Esophagus muscularis mucosa (tissue), 4 donors: ENCODE measurements at regions of chr5 and their contacts with region 1.

Region 1: DNA sequence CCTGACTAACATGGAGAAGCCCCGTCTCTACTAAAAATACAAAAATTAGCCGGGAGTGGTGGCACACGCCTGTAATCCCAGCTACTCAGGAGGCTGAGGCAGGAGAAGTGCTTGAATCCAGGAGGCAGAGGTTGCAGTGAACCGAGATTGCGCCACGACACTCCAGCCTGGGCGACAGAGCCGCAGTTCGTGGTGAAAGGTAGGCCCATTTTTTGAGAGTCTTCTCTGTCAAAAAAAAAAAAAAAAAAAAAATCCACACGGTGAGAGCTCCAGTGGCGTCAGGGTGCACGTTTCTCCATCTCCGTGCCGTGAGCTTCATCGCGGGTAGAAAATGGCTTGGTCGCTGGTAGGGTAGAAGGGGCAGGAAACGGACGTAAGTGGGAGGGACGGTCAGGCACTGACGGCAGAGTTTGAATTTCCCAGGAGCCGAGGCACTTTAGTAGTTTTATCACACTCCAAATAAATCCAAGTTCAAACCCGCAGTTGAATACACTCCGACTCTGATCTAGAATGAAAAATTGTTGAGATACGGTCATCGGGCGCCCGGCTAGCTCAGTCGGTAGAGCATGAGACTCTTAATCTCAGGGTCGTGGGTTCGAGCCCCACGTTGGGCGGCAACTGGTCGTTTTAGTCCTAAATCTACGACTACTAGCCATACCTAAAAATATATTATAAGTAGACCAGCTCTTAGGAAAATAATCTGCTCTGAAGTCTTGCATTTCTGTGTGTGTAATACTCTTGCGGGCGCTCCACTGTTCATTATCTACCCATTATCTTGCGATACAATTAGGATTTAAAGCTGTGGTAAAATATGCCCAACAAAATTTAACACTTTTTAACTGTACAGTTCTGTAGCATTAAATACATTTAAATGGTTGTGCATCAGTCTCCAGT is 2.5 kb upstream of the TRIM7 start:
- DNase-seq: no peak
- H3K4me3 ChIP-seq: peak overlapping the region; percentile 62 to 76 (median 70)
- H3K27ac ChIP-seq: peak overlapping the region; percentile 81 to 86 (median 84)
- H3K4me1 ChIP-seq: peaks cover 19 to 49% (median 40%) of the 10 kb centered on the region in 4 donors
- H3K27me3 ChIP-seq: no peaks in the 10 kb centered on the region
- CTCF ChIP-seq: no peak
- EP300 ChIP-seq: no peak
- POLR2A ChIP-seq: no peak

Region 2: GRCh38 chr5:180915924-180916470 is 291.5 kb before region 1 on chr5:
- intact Hi-C with region 1: no loop called
- DNase-seq: no peak
- H3K4me3 ChIP-seq: no peak overlapping the region
- H3K27ac ChIP-seq: no peak overlapping the region
- H3K4me1 ChIP-seq: no peaks in the 10 kb centered on the region
- H3K27me3 ChIP-seq: peaks cover 0 to 4% (median 0%) of the 10 kb centered on the region in 4 donors
- CTCF ChIP-seq: no peak
- EP300 ChIP-seq: no peak
- POLR2A ChIP-seq: no peak

Region 3: GRCh38 chr5:181191529-181192394 is 15.7 kb before region 1 on chr5:
- intact Hi-C with region 1: loop called (anchors 2 kb)
- DNase-seq: peak; percentile 100
- H3K4me3 ChIP-seq: peak overlapping the region; percentile 76 to 84 (median 78)
- H3K27ac ChIP-seq: peak overlapping the region; percentile 87 to 95 (median 92)
- H3K4me1 ChIP-seq: peaks cover 11 to 49% (median 43%) of the 10 kb centered on the region in 4 donors
- H3K27me3 ChIP-seq: no peaks in the 10 kb centered on the region
- CTCF ChIP-seq: no peak
- EP300 ChIP-seq: no peak
- POLR2A ChIP-seq: peak; percentile 36